Activated naive CD4-positive, alpha-beta T cell treated with anti-CD3 and anti-CD28 coated beads for 36 hours (primary cell): ENCODE measurements at regions of chr11 and their contacts with region 1.

Region 1: GRCh38 chr11:128026596-128026995 is 560.8 kb downstream of the ETS1 start:
- DNase-seq: no peak
- H3K4me3 Mint-ChIP-seq: no peak overlapping the region
- H3K27ac Mint-ChIP-seq: no peak overlapping the region
- H3K4me1 Mint-ChIP-seq: peaks cover 4% of the 10 kb centered on the region
- H3K27me3 Mint-ChIP-seq: no peaks in the 10 kb centered on the region

Region 2: DNA sequence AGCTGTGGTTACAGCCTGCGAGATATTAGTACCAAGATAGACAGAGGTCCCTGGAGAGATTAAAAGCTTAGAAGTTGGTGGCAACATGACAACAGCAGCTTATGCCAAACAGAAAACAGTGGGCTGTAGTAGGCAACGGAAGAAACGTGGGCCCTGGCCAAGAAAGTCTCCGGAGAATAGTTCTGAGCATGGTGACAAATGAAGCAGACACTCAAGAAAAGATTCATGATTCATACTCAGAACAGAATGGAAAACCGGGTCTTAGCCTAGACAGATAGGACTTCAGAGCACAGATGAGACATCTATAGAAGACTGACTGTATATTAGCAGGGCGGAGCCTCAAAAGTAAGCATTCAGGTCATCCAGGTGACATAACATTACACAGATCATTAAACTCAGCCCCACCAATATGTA is 166.6 kb before region 1 on chr11:
- CTCF ChIA-PET with region 1: no interaction called
- intact Hi-C with region 1: no loop called
- DNase-seq: no peak
- H3K4me3 Mint-ChIP-seq: no peak overlapping the region
- H3K27ac Mint-ChIP-seq: no peak overlapping the region
- H3K4me1 Mint-ChIP-seq: no peaks in the 10 kb centered on the region
- H3K27me3 Mint-ChIP-seq: peaks cover 9% of the 10 kb centered on the region

Region 3: DNA sequence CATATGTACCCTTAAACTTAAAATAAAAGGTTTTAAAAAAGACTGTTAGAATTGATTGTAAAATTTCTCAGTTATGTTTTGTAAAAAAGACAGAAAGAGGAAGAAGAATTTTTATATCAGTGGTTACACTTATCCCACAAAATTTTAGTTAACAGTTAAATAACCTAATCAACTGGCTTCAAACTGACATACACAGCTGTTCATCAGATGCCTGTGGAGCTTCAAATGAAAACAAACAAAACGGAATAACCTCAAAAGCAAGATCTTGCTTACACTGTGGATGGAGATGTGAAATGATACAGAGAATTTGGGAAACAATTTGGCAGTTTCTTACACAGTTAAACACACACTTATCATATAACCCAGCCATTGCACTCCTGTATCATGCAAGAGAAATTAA is 39.8 kb after region 1 on chr11:
- CTCF ChIA-PET with region 1: no interaction called
- intact Hi-C with region 1: loop called (anchors 1 kb)
- DNase-seq: no peak
- H3K4me3 Mint-ChIP-seq: no peak overlapping the region
- H3K27ac Mint-ChIP-seq: no peak overlapping the region
- H3K4me1 Mint-ChIP-seq: peaks cover 3% of the 10 kb centered on the region
- H3K27me3 Mint-ChIP-seq: no peaks in the 10 kb centered on the region

Region 4: DNA sequence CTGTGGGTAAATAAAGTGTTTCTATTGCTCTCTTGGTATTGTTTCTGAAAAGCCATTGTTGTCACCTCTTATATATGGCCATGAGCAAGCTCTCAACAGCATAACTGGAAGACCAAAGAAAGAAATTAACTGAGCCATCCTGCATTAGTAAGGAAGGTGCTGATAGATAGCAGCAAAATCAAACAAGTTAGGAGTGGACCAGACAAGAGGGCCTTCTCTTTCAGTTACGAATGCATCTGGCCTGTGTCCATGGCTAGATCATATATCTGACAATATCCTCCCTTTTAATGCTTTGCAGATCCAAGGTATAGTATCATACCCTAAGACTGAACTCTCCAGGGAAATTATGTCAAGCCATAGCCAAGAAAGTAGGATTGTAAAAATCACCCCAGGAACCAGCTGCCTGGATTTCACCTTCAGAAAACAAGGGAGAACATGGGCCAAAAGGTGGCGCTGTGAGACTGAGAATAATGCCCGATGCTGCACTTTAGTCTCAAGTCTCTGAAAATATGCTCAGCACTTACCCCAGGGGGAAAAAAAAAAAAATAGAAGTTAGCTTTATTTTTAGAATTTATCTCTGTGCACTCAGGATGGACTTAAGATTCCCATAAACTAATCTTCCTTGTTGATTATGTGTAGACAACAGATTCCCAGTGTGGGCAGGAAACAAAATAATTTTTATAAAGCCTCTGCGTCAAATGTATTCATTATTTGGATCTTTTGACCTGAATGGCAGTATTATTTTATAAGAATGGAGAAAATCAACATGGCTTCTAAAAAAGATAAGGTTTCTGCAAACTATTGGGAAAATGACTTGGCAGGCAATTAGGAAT is 145.7 kb after region 1 on chr11:
- CTCF ChIA-PET with region 1: interaction called, 9 read pairs
- intact Hi-C with region 1: loop called (anchors 1 kb)
- DNase-seq: peak; percentile 96
- H3K4me3 Mint-ChIP-seq: no peak overlapping the region
- H3K27ac Mint-ChIP-seq: no peak overlapping the region
- H3K4me1 Mint-ChIP-seq: peaks cover 7% of the 10 kb centered on the region
- H3K27me3 Mint-ChIP-seq: no peaks in the 10 kb centered on the region

Region 5: DNA sequence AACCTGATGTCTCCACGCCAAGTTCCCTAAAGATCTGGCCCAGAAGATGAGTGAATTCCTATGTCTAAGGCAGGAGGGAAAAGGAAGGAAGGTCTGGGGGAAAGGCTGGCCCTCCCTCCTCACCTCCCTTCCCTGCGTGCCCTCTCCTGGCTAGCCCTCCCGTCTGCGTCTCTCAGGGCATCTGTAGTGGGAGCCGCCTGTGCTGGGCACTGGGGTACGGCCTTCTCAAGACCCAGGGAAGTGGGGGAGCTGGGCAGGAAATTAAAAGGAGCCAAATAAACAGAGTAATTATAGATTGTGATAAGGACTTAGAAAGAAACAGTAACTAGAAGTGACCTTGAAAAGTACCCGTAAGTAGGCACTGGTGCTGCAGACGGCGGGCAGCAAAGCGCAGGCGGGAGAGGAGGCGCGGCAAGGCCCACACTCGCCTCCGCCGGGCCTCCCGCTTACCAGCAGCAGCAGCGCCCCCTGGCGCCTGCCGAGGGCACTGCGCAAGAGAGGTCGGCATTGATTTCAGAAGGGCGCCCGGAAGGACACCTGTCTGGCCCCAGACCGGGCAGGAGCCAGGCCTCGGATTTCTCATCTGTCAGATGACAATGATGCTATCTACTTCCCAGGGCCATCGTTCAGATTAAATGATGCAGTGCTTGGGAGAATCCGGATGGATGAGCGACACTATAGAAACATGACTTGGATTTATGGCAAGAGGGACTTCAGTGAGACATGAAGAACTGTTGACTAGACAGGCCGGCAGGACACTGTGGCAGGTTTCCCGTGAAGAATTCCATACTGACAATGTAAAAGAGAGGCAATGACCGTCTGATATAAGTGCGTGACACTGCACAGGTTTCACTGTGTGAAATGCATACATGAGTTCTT is 833.2 kb after region 1 on chr11:
- CTCF ChIA-PET with region 1: no interaction called
- intact Hi-C with region 1: loop called (anchors 1 kb)
- DNase-seq: peak; percentile 85
- H3K4me3 Mint-ChIP-seq: no peak overlapping the region
- H3K27ac Mint-ChIP-seq: no peak overlapping the region
- H3K4me1 Mint-ChIP-seq: peaks cover 3% of the 10 kb centered on the region
- H3K27me3 Mint-ChIP-seq: no peaks in the 10 kb centered on the region